H1 (cell line): ENCODE measurements at regions of chr1 and their contacts with region 1.

Region 1: GRCh38 chr1:26363549-26364448 is 8.8 kb downstream of the ZNF683 start:
- DNase-seq: peak; percentile 50 to 97
- H3K4me3 ChIP-seq: no peak overlapping the region
- H3K27ac ChIP-seq: no peak overlapping the region
- H3K4me1 ChIP-seq: peaks cover 4 to 14% (median 10%) of the 10 kb centered on the region in 4 experiments
- H3K27me3 ChIP-seq: peaks cover 0 to 17% (median 11%) of the 10 kb centered on the region in 4 experiments; a peak in 4 of 7 replicates
- CTCF ChIP-seq: peak; percentile 93 to 96 (median 93)
- EP300 ChIP-seq: no peak
- POLR2A ChIP-seq: no peak
- RAD21 ChIP-seq: peak; percentile 81 to 89

Region 2: DNA sequence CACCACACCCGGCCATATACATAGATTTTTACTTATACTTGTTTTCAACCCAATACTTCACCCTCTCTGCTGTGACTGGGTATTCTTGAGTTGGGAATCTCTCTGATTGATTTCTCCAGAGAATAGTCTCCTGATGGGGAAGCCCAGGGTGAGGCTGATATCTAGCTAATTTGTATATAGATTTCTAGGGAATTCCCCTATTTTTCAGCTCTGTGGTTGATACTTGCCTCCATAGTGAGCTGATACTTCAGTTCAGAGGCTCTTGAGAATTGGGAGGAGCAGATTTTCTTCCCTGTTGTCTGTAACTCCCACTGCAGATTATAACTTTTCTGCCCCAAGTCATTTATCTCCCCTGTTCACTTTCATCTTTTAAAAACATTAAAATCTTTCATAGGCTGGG is 98.4 kb before region 1 on chr1:
- CTCF ChIA-PET with region 1: no interaction called
- POLR2A ChIA-PET with region 1: no interaction called
- DNase-seq: no peak
- H3K4me3 ChIP-seq: no peak overlapping the region
- H3K27ac ChIP-seq: no peak overlapping the region
- H3K4me1 ChIP-seq: no peaks in the 10 kb centered on the region
- H3K27me3 ChIP-seq: no peaks in the 10 kb centered on the region
- CTCF ChIP-seq: no peak
- EP300 ChIP-seq: no peak
- POLR2A ChIP-seq: no peak
- RAD21 ChIP-seq: no peak

Region 3: DNA sequence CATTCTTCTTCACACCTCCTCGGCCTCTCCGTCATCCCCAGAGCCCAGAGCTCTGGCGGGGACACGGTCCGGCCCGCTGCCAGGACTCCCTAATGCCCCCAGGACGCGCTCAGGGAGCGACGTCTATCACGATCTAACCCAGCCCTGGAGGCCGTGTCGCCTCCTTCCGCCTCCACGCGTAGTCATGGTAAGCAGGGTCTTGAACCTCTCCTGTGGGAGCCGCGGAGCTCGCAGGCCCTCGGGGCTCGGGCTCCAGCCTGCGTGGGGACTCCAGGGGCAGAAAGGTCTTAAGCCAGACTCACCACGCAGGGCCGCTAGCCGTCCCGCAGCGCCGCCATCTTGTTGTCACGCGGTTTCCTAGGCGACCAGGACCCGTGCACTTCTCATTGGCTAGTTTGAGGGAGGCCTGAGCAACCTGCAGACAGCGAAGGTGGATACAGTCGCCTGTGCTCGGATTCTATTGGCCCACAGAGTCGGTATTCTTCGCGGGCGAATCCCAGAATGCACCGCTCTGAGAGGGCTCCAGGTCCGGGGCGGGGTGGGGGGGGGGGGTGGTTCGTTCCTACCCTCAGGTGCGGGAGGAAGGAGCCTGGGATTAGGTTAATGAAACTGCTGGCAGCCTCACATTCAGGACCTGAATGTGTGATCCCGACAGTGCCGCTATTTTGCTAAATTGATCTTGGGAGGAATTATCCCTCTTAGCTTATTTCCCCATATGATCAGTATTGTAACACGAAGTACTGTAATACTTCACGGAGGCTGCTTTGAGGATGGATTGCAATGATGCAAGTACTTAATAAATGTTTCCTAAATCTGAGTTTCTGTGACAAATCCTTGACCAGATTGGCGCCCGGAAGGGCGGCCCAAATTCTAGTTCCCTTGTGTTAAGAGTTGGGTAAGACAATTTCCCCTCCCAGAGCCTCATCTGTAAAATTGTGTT is 57.2 kb before region 1 on chr1 and contains the start of gene UBXN11:
- CTCF ChIA-PET with region 1: interaction called, 21 read pairs
- POLR2A ChIA-PET with region 1: interaction called, 3 read pairs
- DNase-seq: peak; percentile 78 to 91
- H3K4me3 ChIP-seq: peak within 1 kb of the TSS; percentile 52 to 98 (median 96)
- H3K27ac ChIP-seq: peak within 1 kb of the TSS; percentile 75
- H3K4me1 ChIP-seq: peaks cover 0 to 5% (median 2%) of the 10 kb centered on the region in 4 experiments; a peak in 3 of 7 replicates
- H3K27me3 ChIP-seq: no peaks in the 10 kb centered on the region
- CTCF ChIP-seq: no peak
- EP300 ChIP-seq: no peak
- POLR2A ChIP-seq: peak in 1 of 2 experiments; percentile 55; a peak in 2 of 3 replicates
- RAD21 ChIP-seq: no peak
- total RNA-seq, gene UBXN11: 6.1 and 6.3 TPM in 2 replicates

Region 4: DNA sequence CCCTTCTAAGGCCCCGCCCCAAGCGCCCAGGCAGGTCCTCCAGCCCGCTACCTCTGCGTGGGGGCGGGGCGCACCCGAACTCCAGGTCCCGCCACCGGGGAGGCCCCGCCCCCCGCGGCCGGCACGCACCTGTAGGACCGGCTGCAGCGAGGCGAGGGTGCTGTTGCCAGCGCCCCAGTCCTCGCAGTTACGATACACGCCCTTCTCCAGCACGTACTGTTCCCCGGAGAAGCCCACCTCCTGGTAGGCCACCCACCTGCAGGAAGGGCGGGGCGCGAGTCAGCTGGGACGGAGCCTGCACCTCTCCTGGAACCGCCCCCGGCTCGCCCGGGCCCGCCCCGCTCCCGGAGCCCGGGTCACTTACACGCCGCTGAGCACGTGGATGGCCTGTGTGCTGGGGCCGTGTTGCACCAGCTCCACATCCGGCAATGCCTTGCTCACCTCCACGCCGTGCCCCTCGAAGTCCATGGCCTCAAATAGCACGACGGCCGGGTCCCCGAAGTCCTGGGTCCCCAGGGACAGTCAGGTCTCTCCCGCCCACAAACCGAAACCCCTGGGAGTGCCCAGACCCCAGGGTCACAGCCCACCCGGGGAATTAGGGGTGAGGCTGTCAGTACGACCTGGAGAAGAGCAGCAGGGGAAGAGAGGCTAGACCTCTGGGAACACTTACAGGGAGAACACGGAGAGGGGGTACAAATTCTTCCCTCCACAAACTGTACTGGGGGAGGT is 27.2 kb before region 1 on chr1:
- CTCF ChIA-PET with region 1: interaction called, 139 read pairs
- POLR2A ChIA-PET with region 1: interaction called, 22 read pairs
- DNase-seq: peak; percentile 67 to 97
- H3K4me3 ChIP-seq: peak overlapping the region; percentile 55 to 86 (median 68)
- H3K27ac ChIP-seq: 0 out of 2 replicates have a peak overlapping the region, but pooled peaks have one; percentile 39
- H3K4me1 ChIP-seq: peaks cover 3 to 12% (median 6%) of the 10 kb centered on the region in 4 experiments
- H3K27me3 ChIP-seq: peaks cover 0 to 11% (median 5%) of the 10 kb centered on the region in 4 experiments; a peak in 5 of 7 replicates
- CTCF ChIP-seq: no peak
- EP300 ChIP-seq: no peak
- POLR2A ChIP-seq: no peak
- RAD21 ChIP-seq: no peak

Region 5: GRCh38 chr1:26378088-26378878 is 14.5 kb after region 1 on chr1:
- CTCF ChIA-PET with region 1: interaction called, 79 read pairs
- POLR2A ChIA-PET with region 1: interaction called, 5 read pairs
- DNase-seq: no peak
- H3K4me3 ChIP-seq: no peak overlapping the region
- H3K27ac ChIP-seq: no peak overlapping the region
- H3K4me1 ChIP-seq: peaks cover 0 to 2% (median 0%) of the 10 kb centered on the region in 4 experiments; a peak in 2 of 7 replicates
- H3K27me3 ChIP-seq: no peaks in the 10 kb centered on the region
- CTCF ChIP-seq: no peak
- EP300 ChIP-seq: no peak
- POLR2A ChIP-seq: no peak
- RAD21 ChIP-seq: no peak

Region 6: DNA sequence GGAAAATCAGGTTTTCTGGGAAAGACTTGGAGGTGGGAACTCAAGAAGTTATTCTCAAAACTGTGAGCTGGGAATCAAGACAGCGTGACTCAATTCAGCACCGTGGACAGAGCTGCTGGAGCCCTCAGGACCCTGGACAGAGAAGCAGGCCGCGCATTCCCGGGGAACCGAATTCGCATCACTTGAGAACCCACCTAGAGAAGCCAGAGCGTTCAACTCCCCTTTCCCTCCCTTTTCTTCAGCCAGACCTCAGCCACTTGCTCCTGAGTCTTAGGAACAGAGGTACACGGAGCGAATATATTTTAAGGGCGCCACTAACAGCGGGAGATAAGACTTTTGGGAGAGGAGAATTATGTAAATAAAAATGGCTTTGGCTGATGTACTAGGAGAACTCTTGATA is 44.8 kb after region 1 on chr1:
- CTCF ChIA-PET with region 1: interaction called, 4 read pairs
- POLR2A ChIA-PET with region 1: interaction called, 36 read pairs
- DNase-seq: peak in 1 of 2 experiments; percentile 97
- H3K4me3 ChIP-seq: peak overlapping the region; percentile 41 to 78 (median 60); a peak in 6 of 8 replicates
- H3K27ac ChIP-seq: no peak overlapping the region
- H3K4me1 ChIP-seq: peaks cover 0 to 20% (median 6%) of the 10 kb centered on the region in 4 experiments; a peak in 6 of 7 replicates
- H3K27me3 ChIP-seq: no peaks in the 10 kb centered on the region
- CTCF ChIP-seq: no peak
- EP300 ChIP-seq: peak in 1 of 2 experiments; percentile 13; a peak in 1 of 3 replicates
- POLR2A ChIP-seq: no peak
- RAD21 ChIP-seq: peak in 1 of 2 experiments; percentile 16; a peak in 1 of 4 replicates